ENCODE measurements at regions of chr12 and their contacts with region 1.

Region 1: DNA sequence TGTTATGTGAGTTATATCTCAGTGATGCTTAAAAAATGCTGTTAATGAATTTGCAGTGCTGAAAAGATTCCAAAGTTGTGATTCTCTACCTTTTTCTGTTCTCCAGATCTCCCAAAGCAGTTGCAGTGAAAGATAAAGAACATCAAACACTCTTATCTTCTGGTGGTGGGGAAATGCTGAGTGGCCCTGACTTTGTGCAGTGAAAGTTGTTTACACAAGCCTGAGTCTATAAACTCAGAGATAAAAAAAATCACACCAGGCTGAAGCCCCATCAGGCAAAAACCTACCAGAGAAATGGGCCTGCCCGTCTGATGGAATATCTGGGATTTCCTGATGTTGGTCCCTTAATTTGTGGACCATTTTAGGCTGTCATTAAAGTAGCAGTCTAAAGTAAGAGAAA is 46.1 kb downstream of the RASSF3 start:
- DNase-seq: no peak
- H3K4me3 Mint-ChIP-seq: no peak overlapping the region
- H3K27ac Mint-ChIP-seq: peak overlapping the region; percentile 51
- H3K4me1 Mint-ChIP-seq: peaks cover 80% of the 10 kb centered on the region
- H3K27me3 Mint-ChIP-seq: no peaks in the 10 kb centered on the region

Region 2: GRCh38 chr12:64625243-64626077 is 31.0 kb before region 1 on chr12:
- CTCF ChIA-PET with region 1: interaction called, 3 read pairs
- intact Hi-C with region 1: loop called (anchors 2 kb)
- DNase-seq: peak; percentile 62
- H3K4me3 Mint-ChIP-seq: peak overlapping the region; percentile 57
- H3K27ac Mint-ChIP-seq: peak overlapping the region; percentile 86
- H3K4me1 Mint-ChIP-seq: peaks cover 69% of the 10 kb centered on the region
- H3K27me3 Mint-ChIP-seq: no peaks in the 10 kb centered on the region

Measured in activated naive CD4-positive, alpha-beta T cell treated with anti-CD3 and anti-CD28 coated beads for 36 hours (primary cell).